ENCODE measurements at regions of chr12 and their contacts with region 1.

Region 1: DNA sequence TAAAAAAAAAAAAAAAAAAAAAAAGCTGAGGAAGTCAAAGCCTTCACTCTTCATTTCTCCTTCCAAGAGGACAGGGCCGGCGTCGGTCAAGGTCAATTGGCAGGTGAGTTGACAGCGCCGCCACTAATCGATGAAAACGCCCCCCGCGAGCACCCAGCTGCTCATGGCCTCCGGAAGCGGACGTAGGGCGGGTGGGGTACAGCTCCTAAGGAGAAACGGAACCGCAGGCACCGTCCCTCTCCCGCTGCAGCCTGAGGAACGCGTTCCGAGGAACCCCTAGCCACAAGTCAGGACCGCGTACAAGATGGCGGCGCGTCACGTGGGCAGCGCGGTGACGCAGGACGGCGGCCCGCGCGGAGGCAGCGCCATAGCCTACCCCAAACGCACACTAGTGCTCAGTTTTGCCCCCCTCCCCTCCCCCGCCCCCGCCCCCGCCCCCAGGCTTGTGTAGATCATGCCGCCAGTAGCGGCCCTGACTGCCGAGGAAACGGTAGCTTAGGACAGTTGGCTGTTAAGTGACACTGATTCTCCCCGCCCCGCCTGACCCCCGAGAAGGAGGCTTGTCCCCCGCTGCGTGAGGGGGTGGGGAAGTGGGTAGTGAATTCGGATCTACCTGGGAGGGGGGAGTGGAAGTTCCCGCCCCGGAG is at the start of gene ATF1:
- DNase-seq: peak; percentile 79 to 96 (median 86)
- ATAC-seq: peak; percentile 76
- H3K4me3 ChIP-seq: peak within 1 kb of the TSS; percentile 83
- H3K4me3 Mint-ChIP-seq: peak within 1 kb of the TSS; percentile 91
- H3K27ac ChIP-seq: peak within 1 kb of the TSS; percentile 92 to 96
- H3K27ac Mint-ChIP-seq: peak within 1 kb of the TSS; percentile 93
- H3K4me1 ChIP-seq: peaks cover 27% of the 10 kb centered on the region
- H3K4me1 Mint-ChIP-seq: peaks cover 50% of the 10 kb centered on the region
- H3K27me3 ChIP-seq: no peaks in the 10 kb centered on the region
- H3K27me3 Mint-ChIP-seq: no peaks in the 10 kb centered on the region
- CTCF ChIP-seq: no peak
- total RNA-seq, gene ATF1: 11.3 TPM

Region 2: DNA sequence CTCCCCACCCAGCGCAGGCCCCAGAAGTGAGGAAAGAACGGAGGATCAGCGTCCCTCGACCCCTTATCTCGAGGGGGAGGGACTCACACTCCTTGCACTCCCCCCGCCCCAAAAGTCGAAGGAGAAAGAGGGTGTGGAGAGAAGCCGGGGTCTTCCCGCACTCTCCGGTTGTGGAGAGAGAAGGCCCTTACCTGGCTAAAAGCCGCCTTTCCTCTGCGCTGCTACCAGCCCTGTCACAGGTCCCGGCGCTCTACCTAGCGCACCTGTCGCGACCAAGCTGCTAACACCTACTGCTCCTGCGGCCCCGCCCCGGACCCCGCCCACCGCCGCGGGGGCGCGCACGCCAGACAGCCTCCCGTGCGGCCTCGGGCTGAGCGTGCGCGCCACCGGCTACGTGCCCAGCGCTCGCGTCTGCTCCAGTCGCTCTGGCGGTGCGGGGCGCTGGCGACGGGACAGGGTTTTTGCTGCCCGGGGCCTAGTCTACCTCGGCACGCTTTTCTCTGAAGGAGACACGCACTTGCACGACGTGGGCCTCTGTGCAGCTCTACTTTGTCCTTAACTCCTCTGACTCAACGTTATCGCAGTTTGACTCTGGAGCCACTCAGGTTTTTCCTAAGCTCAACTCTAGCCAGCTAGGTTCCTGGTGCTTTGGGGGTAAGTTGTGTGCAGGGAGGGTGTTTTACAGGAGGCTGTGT is 480.4 kb before region 1 on chr12 and contains the start of gene LIMA1:
- CTCF ChIA-PET with region 1: no interaction called
- POLR2A ChIA-PET with region 1: no interaction called
- intact Hi-C with region 1: loop called in 1 of 2 experiments (anchors 10 kb)
- DNase-seq: peak; percentile 86 to 97 (median 92)
- ATAC-seq: peak; percentile 95
- H3K4me3 ChIP-seq: peak within 1 kb of the TSS; percentile 78
- H3K4me3 Mint-ChIP-seq: peak within 1 kb of the TSS; percentile 94
- H3K27ac ChIP-seq: peak within 1 kb of the TSS; percentile 19 to 53
- H3K27ac Mint-ChIP-seq: peak within 1 kb of the TSS; percentile 86
- H3K4me1 ChIP-seq: peaks cover 22% of the 10 kb centered on the region
- H3K4me1 Mint-ChIP-seq: peaks cover 26% of the 10 kb centered on the region
- H3K27me3 ChIP-seq: no peaks in the 10 kb centered on the region
- H3K27me3 Mint-ChIP-seq: no peaks in the 10 kb centered on the region
- CTCF ChIP-seq: no peak
- total RNA-seq, gene LIMA1: 4.6 to 5.1 TPM

Region 3: DNA sequence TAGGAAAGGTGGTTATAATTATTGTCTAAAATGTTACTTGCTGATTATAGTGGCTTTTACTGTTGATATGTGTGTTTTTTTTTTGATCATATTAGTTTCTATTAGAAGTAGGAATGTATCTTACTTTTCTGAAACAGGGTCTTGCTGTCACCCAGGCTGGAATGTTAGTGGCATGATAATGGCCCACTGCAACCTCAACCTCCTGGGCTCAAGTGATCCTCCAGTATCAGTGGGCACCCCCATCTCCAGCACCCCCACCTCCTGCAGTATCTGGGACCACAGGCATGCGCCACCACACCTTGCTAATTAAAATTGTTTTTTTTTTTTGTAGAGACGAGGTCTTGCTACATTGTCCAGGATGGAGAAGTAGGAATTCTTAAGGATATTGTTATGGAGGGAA is 11.5 kb after region 1 on chr12:
- CTCF ChIA-PET with region 1: interaction called, 12 read pairs
- POLR2A ChIA-PET with region 1: interaction called, 7 read pairs
- intact Hi-C with region 1: no loop called
- DNase-seq: no peak
- ATAC-seq: no peak
- H3K4me3 ChIP-seq: no peak overlapping the region
- H3K4me3 Mint-ChIP-seq: no peak overlapping the region
- H3K27ac ChIP-seq: no peak overlapping the region
- H3K27ac Mint-ChIP-seq: no peak overlapping the region
- H3K4me1 ChIP-seq: peaks cover 11% of the 10 kb centered on the region
- H3K4me1 Mint-ChIP-seq: peaks cover 47% of the 10 kb centered on the region
- H3K27me3 ChIP-seq: no peaks in the 10 kb centered on the region
- H3K27me3 Mint-ChIP-seq: no peaks in the 10 kb centered on the region
- CTCF ChIP-seq: no peak

Region 4: DNA sequence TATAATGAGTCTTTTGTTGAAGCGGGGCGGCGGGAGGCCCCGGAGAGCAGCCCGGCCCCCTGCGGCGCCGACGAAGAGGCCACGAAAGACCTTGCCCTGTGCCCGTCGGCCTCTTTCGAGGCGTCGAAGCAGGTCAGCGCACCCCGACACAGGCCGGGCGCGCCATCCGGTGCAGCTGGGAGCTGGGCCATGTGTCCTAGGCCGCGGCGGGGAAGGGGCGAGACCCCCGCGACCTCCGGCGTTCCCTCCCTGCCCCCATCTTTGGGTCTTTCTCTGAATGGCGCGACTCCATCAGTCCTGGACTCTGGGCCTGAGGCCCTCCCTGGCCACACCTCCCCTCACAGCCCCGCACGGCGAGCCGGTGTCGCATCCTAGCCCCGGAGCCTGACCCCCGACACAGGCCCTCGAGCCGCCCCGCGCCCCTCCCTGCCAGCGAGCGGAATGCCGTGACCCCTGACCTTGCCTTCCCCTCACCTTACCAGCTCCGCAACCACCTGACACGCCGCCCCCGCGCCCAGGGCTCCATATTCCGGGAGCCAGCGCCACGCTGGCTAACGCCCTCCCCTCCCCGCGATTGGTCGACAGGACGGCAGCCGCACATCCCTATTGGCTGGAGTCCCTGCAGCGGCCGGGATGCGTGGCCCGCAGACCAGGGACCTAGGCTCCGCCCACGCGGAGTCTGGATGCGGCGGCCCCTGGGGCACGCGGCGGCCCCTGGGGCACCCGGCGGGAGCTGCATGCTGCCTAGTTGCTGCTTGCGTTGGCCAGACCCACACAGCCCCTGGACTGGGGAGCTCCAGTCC is 262.3 kb after region 1 on chr12 and contains the start of gene SLC11A2:
- CTCF ChIA-PET with region 1: interaction called, 9 read pairs
- POLR2A ChIA-PET with region 1: interaction called, 29 read pairs
- intact Hi-C with region 1: loop called (anchors 1 to 2 kb)
- DNase-seq: peak; percentile 80 to 96 (median 88)
- ATAC-seq: peak; percentile 86
- H3K4me3 ChIP-seq: peak within 1 kb of the TSS; percentile 83
- H3K4me3 Mint-ChIP-seq: peak within 1 kb of the TSS; percentile 97
- H3K27ac ChIP-seq: peak within 1 kb of the TSS; percentile 78 to 83
- H3K27ac Mint-ChIP-seq: peak within 1 kb of the TSS; percentile 92
- H3K4me1 ChIP-seq: peaks cover 57% of the 10 kb centered on the region
- H3K4me1 Mint-ChIP-seq: peaks cover 63% of the 10 kb centered on the region
- H3K27me3 ChIP-seq: no peaks in the 10 kb centered on the region
- H3K27me3 Mint-ChIP-seq: no peaks in the 10 kb centered on the region
- CTCF ChIP-seq: no peak
- total RNA-seq, gene SLC11A2: 43.6 to 47.7 TPM

Region 5: DNA sequence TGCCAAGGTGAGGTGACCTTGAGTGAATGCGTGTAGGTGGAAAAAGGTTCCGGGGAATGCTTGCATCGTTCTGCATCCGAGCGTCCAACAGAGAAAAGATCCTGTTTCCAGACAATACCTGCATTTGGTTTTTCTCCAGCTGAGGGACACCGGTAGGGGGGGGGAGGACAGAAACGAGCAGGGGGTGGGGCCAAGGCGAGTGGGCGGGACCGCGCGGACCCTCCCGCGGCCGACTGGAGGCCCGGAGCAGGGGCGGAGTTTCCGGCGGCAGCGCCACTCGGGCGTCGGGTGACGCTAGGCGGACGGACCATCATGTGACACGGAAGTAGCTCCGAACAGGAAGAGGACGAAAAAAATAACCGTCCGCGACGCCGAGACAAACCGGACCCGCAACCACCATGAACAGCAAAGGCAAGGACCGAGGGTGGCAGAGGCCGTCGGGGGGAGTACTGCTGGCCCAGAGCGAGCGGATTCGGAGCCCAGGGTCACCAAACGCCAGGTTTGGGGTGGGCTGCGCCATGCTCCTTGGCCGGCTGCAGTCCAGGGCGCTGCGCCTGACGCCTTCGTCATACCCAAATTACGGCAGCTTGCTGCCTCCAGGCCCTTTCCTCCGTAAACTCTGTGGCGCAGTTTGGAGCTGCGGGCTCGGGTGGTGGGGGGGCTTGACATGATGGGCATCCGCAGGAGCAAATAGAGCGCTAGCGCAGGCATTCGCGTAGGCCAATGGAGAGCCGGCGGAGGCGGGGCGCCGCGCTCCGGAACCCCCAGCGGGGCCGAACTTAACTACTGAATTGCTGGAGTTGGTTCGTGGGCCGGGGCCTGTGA is 475.0 kb after region 1 on chr12 and contains the start of gene DAZAP2:
- CTCF ChIA-PET with region 1: no interaction called
- POLR2A ChIA-PET with region 1: interaction called, 10 read pairs
- intact Hi-C with region 1: loop called in 1 of 2 experiments (anchors 10 kb)
- DNase-seq: peak; percentile 90 to 98 (median 95)
- ATAC-seq: peak; percentile 86
- H3K4me3 ChIP-seq: peak within 1 kb of the TSS; percentile 99
- H3K4me3 Mint-ChIP-seq: peak within 1 kb of the TSS; percentile 96
- H3K27ac ChIP-seq: peak within 1 kb of the TSS; percentile 100
- H3K27ac Mint-ChIP-seq: peak within 1 kb of the TSS; percentile 97
- H3K4me1 ChIP-seq: peaks cover 36% of the 10 kb centered on the region
- H3K4me1 Mint-ChIP-seq: peaks cover 61% of the 10 kb centered on the region
- H3K27me3 ChIP-seq: no peaks in the 10 kb centered on the region
- H3K27me3 Mint-ChIP-seq: no peaks in the 10 kb centered on the region
- CTCF ChIP-seq: peak; percentile 20
- total RNA-seq, gene DAZAP2: 292 to 310 TPM

Region 6: DNA sequence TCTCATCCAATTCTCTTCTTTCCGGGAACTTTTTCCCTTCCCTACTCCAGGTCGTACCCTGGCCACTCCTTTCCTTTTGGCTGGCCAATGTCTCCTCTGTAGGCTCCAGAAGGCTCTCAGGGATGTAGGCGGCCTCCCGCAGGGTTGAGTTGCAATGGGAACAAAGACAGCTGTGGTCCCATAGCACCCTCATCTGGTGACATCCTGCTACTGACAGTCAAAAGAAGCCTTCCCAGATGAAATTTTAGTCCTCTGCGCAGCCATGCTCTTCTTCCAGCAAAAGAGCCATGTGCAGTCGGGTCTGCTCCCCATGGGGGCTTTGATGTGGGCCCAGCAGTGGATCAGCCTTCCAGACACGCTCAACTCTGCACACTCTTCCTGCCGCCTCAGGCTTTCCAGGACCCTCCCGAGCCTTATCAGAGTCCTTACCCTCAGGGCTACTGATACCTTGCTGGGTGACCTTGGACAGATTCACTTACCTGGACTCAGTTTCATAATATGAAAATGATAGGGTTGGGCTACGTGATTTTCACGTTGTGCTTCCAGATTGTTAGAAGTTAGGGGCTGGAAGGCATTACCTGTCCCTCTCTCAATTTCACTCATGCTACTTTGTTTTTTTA is 588.3 kb after region 1 on chr12:
- CTCF ChIA-PET with region 1: no interaction called
- POLR2A ChIA-PET with region 1: no interaction called
- intact Hi-C with region 1: loop called (anchors 10 kb)
- DNase-seq: peak in 13 of 14 experiments; percentile 16 to 76 (median 27)
- ATAC-seq: peak; percentile 90
- H3K4me3 ChIP-seq: no peak overlapping the region
- H3K4me3 Mint-ChIP-seq: no peak overlapping the region
- H3K27ac ChIP-seq: no peak overlapping the region
- H3K27ac Mint-ChIP-seq: no peak overlapping the region
- H3K4me1 ChIP-seq: peaks cover 5% of the 10 kb centered on the region
- H3K4me1 Mint-ChIP-seq: peaks cover 10% of the 10 kb centered on the region
- H3K27me3 ChIP-seq: no peaks in the 10 kb centered on the region
- H3K27me3 Mint-ChIP-seq: no peaks in the 10 kb centered on the region
- CTCF ChIP-seq: peak; percentile 63